ENCODE measurements at regions of chr5 and their contacts with region 1.

Region 1: GRCh38 chr5:95781101-95781583 is 41.4 kb downstream of the GLRX start:
- DNase-seq: peak; percentile 46 to 86 (median 73)
- ATAC-seq: peak; percentile 97
- H3K4me3 ChIP-seq: peak overlapping the region in 1 of 2 experiments; percentile 43
- H3K4me3 Mint-ChIP-seq: peak overlapping the region; percentile 78
- H3K27ac ChIP-seq: no peak overlapping the region
- H3K27ac Mint-ChIP-seq: peak overlapping the region; percentile 68
- H3K4me1 ChIP-seq: peaks cover 10% of the 10 kb centered on the region
- H3K4me1 Mint-ChIP-seq: peaks cover 14% of the 10 kb centered on the region
- H3K27me3 ChIP-seq: no peaks in the 10 kb centered on the region
- H3K27me3 Mint-ChIP-seq: no peaks in the 10 kb centered on the region
- CTCF ChIP-seq: peak; percentile 99

Region 2: DNA sequence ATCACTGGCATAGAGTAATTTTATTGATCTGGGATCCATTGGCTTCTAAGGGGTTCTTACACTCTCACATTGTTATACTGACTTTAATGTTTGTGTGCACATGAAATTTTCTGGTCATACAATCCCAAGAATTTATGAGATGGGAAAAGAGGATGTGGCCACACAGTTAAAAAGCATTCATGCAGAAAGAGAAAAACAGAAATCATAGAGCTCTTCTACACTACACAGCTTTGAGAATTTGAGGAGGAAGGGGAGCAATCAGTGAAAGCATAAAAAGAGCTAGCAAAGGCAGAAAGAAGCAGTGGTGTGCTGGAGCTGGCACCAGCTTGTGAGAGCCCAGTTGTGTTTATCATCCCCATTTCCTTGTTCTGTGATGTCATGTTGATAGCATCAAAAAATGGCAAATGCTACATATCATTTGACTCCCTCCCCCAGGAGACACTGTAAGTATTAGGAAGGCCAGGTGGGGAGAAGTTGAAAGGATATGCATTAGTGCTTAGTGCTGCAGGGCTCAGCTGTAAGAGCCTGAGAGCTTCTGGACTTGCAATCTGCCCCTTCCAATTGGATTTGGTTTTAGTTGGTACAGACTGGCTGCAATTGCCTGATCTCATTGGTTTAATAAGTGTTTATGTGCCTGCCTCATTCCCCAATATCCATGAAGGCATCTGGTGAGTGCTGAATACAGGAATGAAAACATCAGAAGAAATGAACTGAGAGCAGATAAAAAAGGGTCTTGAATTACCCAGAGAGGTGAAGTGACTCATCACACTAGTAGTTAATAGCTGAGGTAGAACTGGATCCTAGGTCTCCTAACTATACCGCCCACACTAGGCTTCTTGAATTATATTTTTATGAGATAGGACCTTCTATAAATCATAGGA is 19.1 kb before region 1 on chr5:
- CTCF ChIA-PET with region 1: interaction called, 67 read pairs
- POLR2A ChIA-PET with region 1: no interaction called
- intact Hi-C with region 1: no loop called
- DNase-seq: no peak
- ATAC-seq: no peak
- H3K4me3 ChIP-seq: no peak overlapping the region
- H3K4me3 Mint-ChIP-seq: no peak overlapping the region
- H3K27ac ChIP-seq: no peak overlapping the region
- H3K27ac Mint-ChIP-seq: peak overlapping the region; percentile 16
- H3K4me1 ChIP-seq: peaks cover 23% of the 10 kb centered on the region
- H3K4me1 Mint-ChIP-seq: peaks cover 28% of the 10 kb centered on the region
- H3K27me3 ChIP-seq: no peaks in the 10 kb centered on the region
- H3K27me3 Mint-ChIP-seq: no peaks in the 10 kb centered on the region
- CTCF ChIP-seq: no peak

Region 3: GRCh38 chr5:95808686-95809413 is 27.7 kb after region 1 on chr5:
- CTCF ChIA-PET with region 1: interaction called, 154 read pairs
- POLR2A ChIA-PET with region 1: interaction called, 7 read pairs
- intact Hi-C with region 1: no loop called
- DNase-seq: peak; percentile 54 to 95 (median 79)
- ATAC-seq: peak; percentile 99
- H3K4me3 ChIP-seq: peak overlapping the region in 1 of 2 experiments; percentile 9
- H3K4me3 Mint-ChIP-seq: peak overlapping the region; percentile 70
- H3K27ac ChIP-seq: peak overlapping the region; percentile 5 to 61
- H3K27ac Mint-ChIP-seq: peak overlapping the region; percentile 80
- H3K4me1 ChIP-seq: peaks cover 60% of the 10 kb centered on the region
- H3K4me1 Mint-ChIP-seq: peaks cover 58% of the 10 kb centered on the region
- H3K27me3 ChIP-seq: no peaks in the 10 kb centered on the region
- H3K27me3 Mint-ChIP-seq: no peaks in the 10 kb centered on the region
- CTCF ChIP-seq: no peak

Region 4: GRCh38 chr5:95835682-95836385 is 54.7 kb after region 1 on chr5:
- CTCF ChIA-PET with region 1: interaction called, 641 read pairs
- POLR2A ChIA-PET with region 1: interaction called, 5 read pairs
- intact Hi-C with region 1: no loop called
- DNase-seq: peak in 5 of 9 experiments; percentile 43 to 68 (median 50)
- ATAC-seq: peak; percentile 26
- H3K4me3 ChIP-seq: peak overlapping the region; percentile 80 to 94
- H3K4me3 Mint-ChIP-seq: peak overlapping the region; percentile 82
- H3K27ac ChIP-seq: peak overlapping the region; percentile 39 to 82
- H3K27ac Mint-ChIP-seq: peak overlapping the region; percentile 88
- H3K4me1 ChIP-seq: peaks cover 30% of the 10 kb centered on the region
- H3K4me1 Mint-ChIP-seq: peaks cover 52% of the 10 kb centered on the region
- H3K27me3 ChIP-seq: no peaks in the 10 kb centered on the region
- H3K27me3 Mint-ChIP-seq: no peaks in the 10 kb centered on the region
- CTCF ChIP-seq: no peak

Region 5: DNA sequence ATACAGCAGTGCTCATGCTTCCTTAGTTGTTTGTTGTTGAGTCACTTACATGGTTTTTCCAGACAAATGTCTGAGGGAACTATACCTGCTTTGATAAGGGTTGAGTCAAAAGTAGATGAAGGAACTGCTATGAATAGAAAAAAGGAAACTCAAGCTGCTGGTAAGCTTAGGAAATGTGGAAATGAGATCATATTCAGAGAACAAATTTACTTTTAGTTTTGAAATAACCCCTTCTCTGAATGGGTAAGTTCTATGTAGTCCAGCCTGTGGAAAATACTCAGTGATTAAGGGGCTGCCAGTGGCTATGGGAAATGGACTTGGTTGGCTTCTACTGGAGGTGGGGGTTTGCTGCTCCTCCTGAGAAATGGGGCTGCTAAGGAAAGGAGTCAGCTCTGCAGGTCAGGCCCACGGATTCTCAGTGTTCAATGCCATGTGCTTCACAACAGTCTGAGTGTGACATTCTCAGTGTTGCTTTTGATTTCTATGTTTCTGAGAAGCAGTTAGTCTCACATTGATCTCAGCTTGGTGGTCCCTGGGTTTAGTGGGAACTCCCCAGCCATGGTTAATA is 89.0 kb after region 1 on chr5:
- CTCF ChIA-PET with region 1: interaction called, 10 read pairs
- POLR2A ChIA-PET with region 1: no interaction called
- intact Hi-C with region 1: no loop called
- DNase-seq: peak in 1 of 9 experiments; percentile 35
- ATAC-seq: peak; percentile 33
- H3K4me3 ChIP-seq: no peak overlapping the region
- H3K4me3 Mint-ChIP-seq: peak overlapping the region; percentile 53
- H3K27ac ChIP-seq: no peak overlapping the region
- H3K27ac Mint-ChIP-seq: no peak overlapping the region
- H3K4me1 ChIP-seq: peaks cover 32% of the 10 kb centered on the region
- H3K4me1 Mint-ChIP-seq: peaks cover 31% of the 10 kb centered on the region
- H3K27me3 ChIP-seq: no peaks in the 10 kb centered on the region
- H3K27me3 Mint-ChIP-seq: no peaks in the 10 kb centered on the region
- CTCF ChIP-seq: no peak

Region 6: DNA sequence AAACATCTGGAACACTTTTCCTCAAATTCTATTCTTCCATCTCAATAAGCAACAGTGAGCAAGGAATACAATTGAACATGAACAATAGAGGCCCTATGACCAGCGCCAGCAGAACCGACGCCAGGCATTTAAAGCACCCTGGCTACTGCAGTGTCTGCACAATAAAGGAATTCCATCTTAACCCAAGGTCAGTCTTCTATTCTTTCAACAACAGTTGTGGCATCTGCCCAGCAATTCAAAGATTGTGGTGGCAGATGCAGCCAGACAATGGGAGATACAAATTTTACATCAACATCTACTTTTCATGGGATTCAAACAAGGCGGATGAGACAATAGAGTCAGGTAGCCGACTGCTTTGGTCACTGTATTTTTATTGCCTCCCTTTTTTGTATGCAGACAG is 114.6 kb after region 1 on chr5:
- CTCF ChIA-PET with region 1: no interaction called
- POLR2A ChIA-PET with region 1: no interaction called
- intact Hi-C with region 1: no loop called
- DNase-seq: no peak
- ATAC-seq: no peak
- H3K4me3 ChIP-seq: no peak overlapping the region
- H3K4me3 Mint-ChIP-seq: no peak overlapping the region
- H3K27ac ChIP-seq: no peak overlapping the region
- H3K27ac Mint-ChIP-seq: no peak overlapping the region
- H3K4me1 ChIP-seq: no peaks in the 10 kb centered on the region
- H3K4me1 Mint-ChIP-seq: no peaks in the 10 kb centered on the region
- H3K27me3 ChIP-seq: no peaks in the 10 kb centered on the region
- H3K27me3 Mint-ChIP-seq: no peaks in the 10 kb centered on the region
- CTCF ChIP-seq: no peak

Region 7: GRCh38 chr5:97388794-97389193 is 1607.7 kb after region 1 on chr5:
- CTCF ChIA-PET with region 1: no interaction called
- POLR2A ChIA-PET with region 1: no interaction called
- intact Hi-C with region 1: no loop called
- DNase-seq: no peak
- ATAC-seq: no peak
- H3K4me3 ChIP-seq: no peak overlapping the region
- H3K4me3 Mint-ChIP-seq: no peak overlapping the region
- H3K27ac ChIP-seq: no peak overlapping the region
- H3K27ac Mint-ChIP-seq: no peak overlapping the region
- H3K4me1 ChIP-seq: no peaks in the 10 kb centered on the region
- H3K4me1 Mint-ChIP-seq: no peaks in the 10 kb centered on the region
- H3K27me3 ChIP-seq: no peaks in the 10 kb centered on the region
- H3K27me3 Mint-ChIP-seq: no peaks in the 10 kb centered on the region
- CTCF ChIP-seq: no peak